Cardiac septum (tissue), 1 donor: ENCODE measurements at regions of chr18 and their contacts with region 1.

Region 1: GRCh38 chr18:26813043-26813442 is 52.5 kb downstream of the AQP4 start:
- DNase-seq: no peak

Region 2: GRCh38 chr18:26593365-26594320 is 219.4 kb before region 1 on chr18:
- intact Hi-C with region 1: no loop called
- DNase-seq: no peak

Region 3: GRCh38 chr18:26963292-26963691 is 150.2 kb after region 1 on chr18:
- intact Hi-C with region 1: loop called (anchors 10 kb)
- DNase-seq: no peak

Region 4: GRCh38 chr18:27005589-27005988 is 192.5 kb after region 1 on chr18:
- intact Hi-C with region 1: loop called (anchors 10 kb)
- DNase-seq: no peak